Activated CD4-positive, alpha-beta T cell treated with anti-CD3 and anti-CD28 coated beads for 36 hours (primary cell): ENCODE measurements at regions of chr1 and their contacts with region 1.

Region 1: DNA sequence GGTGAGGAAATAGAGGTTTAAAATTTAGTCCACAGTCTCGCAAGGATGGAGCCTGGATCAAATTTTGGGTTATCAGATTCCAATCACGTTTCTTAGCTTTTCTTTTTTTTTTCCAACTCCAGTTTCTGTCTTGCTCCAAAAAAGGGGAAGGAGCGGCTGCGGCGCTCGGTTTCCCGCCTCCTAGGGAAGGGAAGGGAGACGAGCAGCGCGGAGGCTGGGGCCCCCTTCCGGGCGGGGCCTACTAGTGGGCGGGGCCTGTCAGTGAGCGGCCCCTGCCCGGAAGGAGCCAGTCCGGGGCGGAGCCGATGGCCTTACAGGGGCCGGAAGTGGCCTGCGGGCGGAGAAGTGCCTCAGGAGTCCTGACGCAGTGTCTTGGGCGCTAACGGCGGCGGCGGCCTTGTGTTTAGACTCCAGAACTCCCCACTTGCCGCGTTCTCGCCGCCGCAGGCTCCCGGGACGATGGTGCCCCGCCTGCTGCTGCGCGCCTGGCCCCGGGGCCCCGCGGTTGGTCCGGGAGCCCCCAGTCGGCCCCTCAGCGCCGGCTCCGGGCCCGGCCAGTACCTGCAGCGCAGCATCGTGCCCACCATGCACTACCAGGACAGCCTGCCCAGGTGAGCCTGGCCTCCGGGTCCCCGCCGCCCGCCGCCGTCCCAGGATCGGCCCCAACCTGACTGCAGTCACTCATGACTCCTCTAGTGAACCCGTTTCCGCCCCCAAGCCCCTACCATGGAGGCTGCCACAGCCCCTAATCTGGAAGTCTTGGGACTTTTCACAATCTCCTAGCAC is at the start of gene CPT2:
- DNase-seq: peak; percentile 96
- ATAC-seq: peak; percentile 98
- H3K4me3 Mint-ChIP-seq: peak within 1 kb of the TSS; percentile 98
- H3K27ac Mint-ChIP-seq: peak within 1 kb of the TSS; percentile 99
- H3K4me1 Mint-ChIP-seq: peaks cover 25% of the 10 kb centered on the region
- H3K27me3 Mint-ChIP-seq: no peaks in the 10 kb centered on the region
- total RNA-seq, gene CPT2: 20.7 to 23.7 TPM

Region 2: GRCh38 chr1:52842643-52843309 is 353.9 kb before region 1 on chr1 and contains the start of gene ZYG11A:
- CTCF ChIA-PET with region 1: no interaction called
- POLR2A ChIA-PET with region 1: no interaction called
- intact Hi-C with region 1: loop called in 1 of 2 experiments (anchors 2 kb)
- DNase-seq: peak; percentile 89
- ATAC-seq: peak; percentile 98
- H3K4me3 Mint-ChIP-seq: peak within 1 kb of the TSS; percentile 58
- H3K27ac Mint-ChIP-seq: no peak within 1 kb of the TSS
- H3K4me1 Mint-ChIP-seq: peaks cover 5% of the 10 kb centered on the region
- H3K27me3 Mint-ChIP-seq: peaks cover 18% of the 10 kb centered on the region
- total RNA-seq, gene ZYG11A: 0.11 to 0.25 TPM

Region 3: GRCh38 chr1:52927212-52928014 is 269.3 kb before region 1 on chr1 and contains the start of gene SCP2:
- CTCF ChIA-PET with region 1: no interaction called
- POLR2A ChIA-PET with region 1: no interaction called
- intact Hi-C with region 1: loop called in 1 of 2 experiments (anchors 1 kb)
- DNase-seq: peak; percentile 90
- ATAC-seq: peak; percentile 94
- H3K4me3 Mint-ChIP-seq: peak within 1 kb of the TSS; percentile 78
- H3K27ac Mint-ChIP-seq: peak within 1 kb of the TSS; percentile 68
- H3K4me1 Mint-ChIP-seq: peaks cover 14% of the 10 kb centered on the region
- H3K27me3 Mint-ChIP-seq: no peaks in the 10 kb centered on the region
- total RNA-seq, gene SCP2: 46.6 to 67.1 TPM

Region 4: GRCh38 chr1:53182111-53182593 is 14.5 kb before region 1 on chr1:
- CTCF ChIA-PET with region 1: interaction called, 17 read pairs
- POLR2A ChIA-PET with region 1: no interaction called
- intact Hi-C with region 1: no loop called
- DNase-seq: peak; percentile 93
- ATAC-seq: peak; percentile 95
- H3K4me3 Mint-ChIP-seq: no peak overlapping the region
- H3K27ac Mint-ChIP-seq: no peak overlapping the region
- H3K4me1 Mint-ChIP-seq: no peaks in the 10 kb centered on the region
- H3K27me3 Mint-ChIP-seq: peaks cover 3% of the 10 kb centered on the region

Region 5: GRCh38 chr1:53238197-53239155 is 41.8 kb after region 1 on chr1 and contains the start of gene MAGOH:
- CTCF ChIA-PET with region 1: no interaction called
- POLR2A ChIA-PET with region 1: no interaction called
- intact Hi-C with region 1: loop called (anchors 1 to 2 kb)
- DNase-seq: peak; percentile 95
- ATAC-seq: peak; percentile 98
- H3K4me3 Mint-ChIP-seq: peak within 1 kb of the TSS; percentile 96
- H3K27ac Mint-ChIP-seq: peak within 1 kb of the TSS; percentile 93
- H3K4me1 Mint-ChIP-seq: peaks cover 24% of the 10 kb centered on the region
- H3K27me3 Mint-ChIP-seq: no peaks in the 10 kb centered on the region
- total RNA-seq, gene MAGOH: 73.7 to 92.3 TPM